OCI-LY7 (cell line): ENCODE measurements at regions of chr7 and their contacts with region 1.

Region 1: GRCh38 chr7:40232242-40232893 is 97.6 kb downstream of the SUGCT start:
- DNase-seq: peak; percentile 73
- H3K4me3 ChIP-seq: no peak overlapping the region
- H3K27ac ChIP-seq: no peak overlapping the region
- H3K4me1 ChIP-seq: peaks cover 10% of the 10 kb centered on the region
- CTCF ChIP-seq: peak; percentile 85

Region 2: DNA sequence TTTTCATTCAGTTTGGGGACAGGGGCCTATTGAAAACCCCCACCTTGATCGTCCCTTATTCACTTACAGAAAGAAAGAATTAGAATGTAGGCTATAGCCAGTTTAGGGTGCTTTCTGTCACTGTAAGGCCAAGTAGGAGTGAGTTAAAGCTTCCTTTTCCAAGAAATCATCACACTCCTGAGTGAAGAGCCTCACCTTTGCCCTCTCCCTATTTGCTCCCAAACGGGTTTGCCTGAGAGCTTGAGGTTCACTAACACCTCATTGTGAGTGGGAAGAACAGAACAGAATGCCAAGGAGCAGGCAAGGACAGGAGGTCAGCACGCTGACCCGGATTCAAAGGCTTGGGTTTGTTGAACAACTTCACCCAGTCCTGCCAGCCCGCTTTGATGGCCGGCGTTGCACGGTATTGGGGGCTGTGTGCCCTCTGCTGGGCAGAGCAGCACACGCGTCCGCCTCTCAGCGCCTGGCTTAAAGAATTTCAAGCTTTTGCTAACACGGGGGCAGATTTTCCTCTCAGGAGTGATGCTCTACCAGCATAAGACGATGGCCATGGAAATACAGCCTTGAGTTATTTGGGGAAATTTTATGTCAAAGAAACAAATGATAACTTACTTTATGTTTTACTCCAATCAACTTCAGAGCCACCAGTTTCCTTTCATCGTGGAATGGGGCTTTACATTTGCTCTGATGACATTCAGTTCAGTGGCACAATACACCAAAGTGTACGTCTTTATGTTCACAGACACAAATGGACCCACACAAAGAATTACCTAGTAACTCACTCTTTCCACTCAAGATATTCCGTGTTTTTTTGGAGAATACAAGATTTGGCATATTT is 372.5 kb after region 1 on chr7:
- CTCF ChIA-PET with region 1: no interaction called
- POLR2A ChIA-PET with region 1: interaction called, 3 read pairs
- intact Hi-C with region 1: loop called (anchors 2 kb)
- DNase-seq: peak; percentile 41
- H3K4me3 ChIP-seq: no peak overlapping the region
- H3K27ac ChIP-seq: no peak overlapping the region
- H3K4me1 ChIP-seq: no peaks in the 10 kb centered on the region
- CTCF ChIP-seq: peak; percentile 75

Region 3: GRCh38 chr7:41705109-41705901 is 1472.9 kb after region 1 on chr7:
- CTCF ChIA-PET with region 1: no interaction called
- POLR2A ChIA-PET with region 1: no interaction called
- intact Hi-C with region 1: loop called (anchors 5 kb)
- DNase-seq: peak; percentile 65
- H3K4me3 ChIP-seq: peak overlapping the region; percentile 49
- H3K27ac ChIP-seq: no peak overlapping the region
- H3K4me1 ChIP-seq: peaks cover 5% of the 10 kb centered on the region
- CTCF ChIP-seq: peak; percentile 67